Activated naive CD4-positive, alpha-beta T cell treated with anti-CD3 and anti-CD28 coated beads for 36 hours (primary cell): ENCODE measurements at regions of chr3 and their contacts with region 1.

Region 1: DNA sequence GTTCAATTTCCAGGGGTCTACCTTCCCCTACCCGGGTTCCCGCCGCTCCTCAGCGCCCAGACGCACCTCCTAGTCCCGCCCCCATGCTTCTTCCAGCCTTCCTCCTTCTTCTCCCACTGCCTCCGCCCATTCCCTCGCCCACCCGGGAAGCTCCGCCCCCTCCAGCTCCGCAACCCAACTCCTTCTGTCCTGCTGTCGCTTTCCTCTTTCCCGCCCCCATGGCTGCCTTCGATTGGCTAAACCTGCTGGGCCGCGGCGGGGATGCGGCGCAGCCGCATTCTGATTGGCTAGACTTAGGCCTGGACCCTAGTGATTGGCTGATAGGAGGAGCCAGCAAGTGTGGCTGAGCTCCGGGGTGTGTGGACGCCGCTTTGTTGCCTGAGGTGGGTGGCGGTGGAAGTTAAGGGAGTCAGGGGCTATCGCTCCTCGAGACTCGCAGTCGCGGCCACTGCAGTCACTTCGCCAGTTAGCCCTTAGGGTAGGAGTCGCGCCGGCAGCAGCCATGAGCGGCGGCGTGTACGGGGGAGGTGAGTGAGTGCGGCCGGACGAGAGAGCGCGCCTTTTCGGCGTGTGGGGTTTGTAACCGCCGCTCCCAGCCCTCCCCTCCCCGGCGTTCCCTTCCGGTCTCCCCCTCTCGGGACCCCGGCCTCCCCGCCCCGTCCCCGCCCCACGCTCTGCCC is at the start of gene ACTL6A:
- DNase-seq: peak; percentile 99
- H3K4me3 Mint-ChIP-seq: peak within 1 kb of the TSS; percentile 97
- H3K27ac Mint-ChIP-seq: peak within 1 kb of the TSS; percentile 96
- H3K4me1 Mint-ChIP-seq: peaks cover 28% of the 10 kb centered on the region
- H3K27me3 Mint-ChIP-seq: peaks cover 2% of the 10 kb centered on the region
- total RNA-seq, gene ACTL6A: 89.2 to 90.0 TPM

Region 2: GRCh38 chr3:178436773-178437172 is 1126.0 kb before region 1 on chr3:
- CTCF ChIA-PET with region 1: interaction called, 3 read pairs
- intact Hi-C with region 1: loop called (anchors 2 kb)
- DNase-seq: no peak
- H3K4me3 Mint-ChIP-seq: no peak overlapping the region
- H3K27ac Mint-ChIP-seq: no peak overlapping the region
- H3K4me1 Mint-ChIP-seq: no peaks in the 10 kb centered on the region
- H3K27me3 Mint-ChIP-seq: no peaks in the 10 kb centered on the region

Region 3: GRCh38 chr3:179071550-179072397 is 491.0 kb before region 1 on chr3 and contains the start of gene ZMAT3:
- CTCF ChIA-PET with region 1: no interaction called
- intact Hi-C with region 1: loop called (anchors 1 kb)
- DNase-seq: peak; percentile 86
- H3K4me3 Mint-ChIP-seq: peak within 1 kb of the TSS; percentile 99
- H3K27ac Mint-ChIP-seq: peak within 1 kb of the TSS; percentile 89
- H3K4me1 Mint-ChIP-seq: peaks cover 42% of the 10 kb centered on the region
- H3K27me3 Mint-ChIP-seq: no peaks in the 10 kb centered on the region
- total RNA-seq, gene ZMAT3: 26.9 to 28.3 TPM

Region 4: DNA sequence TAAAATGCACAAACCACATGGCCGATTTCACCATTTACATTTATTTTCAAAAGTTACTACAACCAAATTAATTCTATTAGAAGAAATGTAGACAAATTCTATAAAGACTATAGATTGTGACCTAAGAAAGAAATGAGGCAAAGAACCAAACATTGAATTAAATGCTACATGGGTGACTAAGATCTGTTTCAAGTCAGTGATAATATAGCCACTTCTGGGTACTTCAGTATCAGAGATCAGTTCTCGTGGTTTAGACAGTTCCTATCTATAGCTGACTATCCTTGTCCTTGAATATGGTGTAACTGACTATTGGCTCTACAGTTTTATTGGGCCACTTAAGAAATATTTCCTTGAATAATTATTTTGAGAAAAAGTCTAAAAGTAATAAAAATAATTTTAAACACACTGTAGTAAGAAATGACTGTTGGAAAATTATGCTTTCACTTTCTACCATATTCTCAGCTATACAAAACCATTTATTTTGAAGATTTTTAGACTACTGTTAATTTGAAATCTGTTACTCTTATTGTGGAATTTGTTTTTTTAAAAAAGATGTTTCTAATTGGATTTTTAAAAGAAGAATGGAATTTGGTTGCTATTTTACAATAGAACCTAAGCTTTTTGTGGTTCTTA is 325.9 kb before region 1 on chr3:
- CTCF ChIA-PET with region 1: no interaction called
- intact Hi-C with region 1: no loop called
- DNase-seq: no peak
- H3K4me3 Mint-ChIP-seq: no peak overlapping the region
- H3K27ac Mint-ChIP-seq: no peak overlapping the region
- H3K4me1 Mint-ChIP-seq: peaks cover 3% of the 10 kb centered on the region
- H3K27me3 Mint-ChIP-seq: no peaks in the 10 kb centered on the region

Region 5: GRCh38 chr3:179347345-179348194 is 215.2 kb before region 1 on chr3 and contains the start of gene MFN1:
- CTCF ChIA-PET with region 1: no interaction called
- intact Hi-C with region 1: loop called (anchors 1 kb)
- DNase-seq: peak; percentile 94
- H3K4me3 Mint-ChIP-seq: peak within 1 kb of the TSS; percentile 91
- H3K27ac Mint-ChIP-seq: peak within 1 kb of the TSS; percentile 91
- H3K4me1 Mint-ChIP-seq: peaks cover 13% of the 10 kb centered on the region
- H3K27me3 Mint-ChIP-seq: no peaks in the 10 kb centered on the region
- total RNA-seq, gene MFN1: 23.0 to 23.1 TPM

Region 6: DNA sequence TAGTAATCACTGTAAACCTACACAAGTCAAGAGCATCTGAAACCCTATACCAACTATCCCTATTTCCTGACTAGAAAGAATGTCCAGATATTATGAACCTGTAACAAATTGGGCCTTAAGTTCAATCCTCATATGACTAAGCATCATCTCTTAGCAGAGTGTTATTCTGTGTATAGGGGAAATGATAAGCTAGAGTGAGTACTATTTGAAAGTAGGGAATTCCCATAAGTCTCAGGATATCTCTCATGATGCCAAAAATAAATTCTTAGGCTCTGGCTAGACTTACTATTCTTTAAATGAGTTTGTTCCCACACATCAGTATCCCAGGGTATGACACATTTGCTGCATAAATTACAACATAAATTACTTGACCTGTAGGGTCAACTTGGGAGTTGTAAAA is 26.4 kb after region 1 on chr3:
- CTCF ChIA-PET with region 1: interaction called, 4 read pairs
- intact Hi-C with region 1: loop called (anchors 1 kb)
- DNase-seq: no peak
- H3K4me3 Mint-ChIP-seq: no peak overlapping the region
- H3K27ac Mint-ChIP-seq: peak overlapping the region; percentile 51
- H3K4me1 Mint-ChIP-seq: peaks cover 15% of the 10 kb centered on the region
- H3K27me3 Mint-ChIP-seq: no peaks in the 10 kb centered on the region

Region 7: DNA sequence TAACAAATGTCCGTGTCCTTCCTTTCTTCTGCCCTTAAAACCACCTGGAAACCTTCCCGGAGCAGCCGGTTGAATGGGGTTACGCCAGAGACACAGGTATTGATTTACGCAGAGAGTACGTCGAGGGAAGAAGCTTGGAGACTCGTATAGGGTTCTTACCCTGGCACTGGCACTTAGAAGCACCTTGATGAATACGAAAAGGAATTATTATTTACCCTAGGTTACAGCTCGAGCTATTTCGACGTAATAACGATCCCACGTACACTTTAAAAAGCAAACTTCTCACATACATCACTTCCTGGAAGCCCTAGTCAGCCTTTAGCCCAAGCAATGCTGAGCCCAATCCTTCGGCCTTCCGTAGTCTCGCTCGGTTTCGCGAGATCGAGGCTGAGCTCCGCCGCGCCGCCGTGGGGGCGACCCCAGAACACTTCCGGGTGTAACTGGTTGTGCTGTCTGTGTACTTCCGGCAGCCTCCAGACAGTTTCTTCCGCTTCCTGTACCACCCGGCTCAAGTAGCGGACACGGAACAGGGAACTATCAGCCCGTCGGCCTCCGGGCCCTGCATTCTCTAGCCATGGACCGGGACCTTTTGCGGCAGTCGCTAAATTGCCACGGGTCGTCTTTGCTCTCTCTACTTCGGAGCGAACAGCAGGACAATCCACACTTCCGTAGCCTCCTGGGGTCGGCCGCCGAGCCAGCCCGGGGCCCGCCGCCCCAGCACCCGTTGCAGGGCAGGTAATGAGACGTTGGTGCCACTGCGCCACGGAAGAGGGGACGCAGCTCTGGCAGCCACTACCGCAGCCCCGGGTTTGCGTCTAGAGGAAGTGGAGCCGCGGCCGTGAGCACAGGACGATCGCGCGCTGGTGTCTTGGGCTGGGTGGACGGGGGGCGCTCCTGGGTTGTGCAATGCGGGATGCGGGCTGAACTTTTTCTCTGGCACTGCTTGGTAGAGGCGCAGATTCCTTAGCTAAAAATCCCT is 1039.2 kb after region 1 on chr3 and contains the start of gene TTC14:
- CTCF ChIA-PET with region 1: no interaction called
- intact Hi-C with region 1: loop called (anchors 1 kb)
- DNase-seq: peak; percentile 96
- H3K4me3 Mint-ChIP-seq: peak within 1 kb of the TSS; percentile 94
- H3K27ac Mint-ChIP-seq: peak within 1 kb of the TSS; percentile 91
- H3K4me1 Mint-ChIP-seq: peaks cover 15% of the 10 kb centered on the region
- H3K27me3 Mint-ChIP-seq: peaks cover 11% of the 10 kb centered on the region
- total RNA-seq, gene TTC14: 51.7 to 52.4 TPM